ENCODE measurements at regions of chr11 and their contacts with region 1.

Region 1: GRCh38 chr11:30586251-30587144 is at the start of gene MPPED2:
- DNase-seq: peak in 7 of 10 donors; percentile 11 to 86 (median 31)

Region 2: GRCh38 chr11:30171661-30172060 is 414.8 kb before region 1 on chr11:
- intact Hi-C with region 1: no loop called
- DNase-seq: no peak

Region 3: DNA sequence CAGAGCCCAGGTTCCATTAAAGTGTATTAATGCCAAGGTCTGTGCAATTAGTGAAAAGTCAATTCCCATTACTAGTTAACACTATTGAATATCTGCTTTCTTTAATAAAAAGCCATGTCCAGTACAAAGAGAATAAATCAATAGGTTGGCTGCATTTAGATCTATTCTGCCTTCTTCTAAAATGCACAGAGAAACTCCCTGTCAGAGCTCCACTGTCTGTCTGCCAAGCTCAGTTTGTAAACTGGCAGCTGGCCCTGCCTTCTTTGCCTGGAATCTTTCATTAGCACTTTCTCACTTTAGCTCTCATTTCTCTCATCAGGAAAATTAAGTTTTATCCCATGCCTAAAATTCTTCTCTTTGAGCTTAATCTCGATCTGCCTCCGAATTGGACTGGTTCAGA is 228.0 kb before region 1 on chr11:
- intact Hi-C with region 1: loop called (anchors 10 kb)
- DNase-seq: peak in 7 of 10 donors; percentile 22 to 82 (median 31)

Region 4: GRCh38 chr11:30481330-30481729 is 105.2 kb before region 1 on chr11:
- intact Hi-C with region 1: loop called (anchors 5 kb)
- DNase-seq: no peak

Region 5: GRCh38 chr11:30535818-30536217 is 50.7 kb before region 1 on chr11:
- intact Hi-C with region 1: no loop called
- DNase-seq: peak in 1 of 10 donors; percentile 43

Region 6: GRCh38 chr11:30855383-30856006 is 269.0 kb after region 1 on chr11:
- intact Hi-C with region 1: loop called (anchors 10 kb)
- DNase-seq: no peak

Measured in posterior cingulate gyrus (tissue), 11 donors.